Activated naive CD4-positive, alpha-beta T cell treated with anti-CD3 and anti-CD28 coated beads for 36 hours (primary cell): ENCODE measurements at regions of chr12 and their contacts with region 1.

Region 1: GRCh38 chr12:9869307-9870161 is at the start of gene CLEC2B:
- DNase-seq: peak; percentile 37
- H3K4me3 Mint-ChIP-seq: peak within 1 kb of the TSS; percentile 91
- H3K27ac Mint-ChIP-seq: peak within 1 kb of the TSS; percentile 98
- H3K4me1 Mint-ChIP-seq: peaks cover 22% of the 10 kb centered on the region
- H3K27me3 Mint-ChIP-seq: no peaks in the 10 kb centered on the region
- total RNA-seq, gene CLEC2B: 30.3 to 30.7 TPM

Region 2: DNA sequence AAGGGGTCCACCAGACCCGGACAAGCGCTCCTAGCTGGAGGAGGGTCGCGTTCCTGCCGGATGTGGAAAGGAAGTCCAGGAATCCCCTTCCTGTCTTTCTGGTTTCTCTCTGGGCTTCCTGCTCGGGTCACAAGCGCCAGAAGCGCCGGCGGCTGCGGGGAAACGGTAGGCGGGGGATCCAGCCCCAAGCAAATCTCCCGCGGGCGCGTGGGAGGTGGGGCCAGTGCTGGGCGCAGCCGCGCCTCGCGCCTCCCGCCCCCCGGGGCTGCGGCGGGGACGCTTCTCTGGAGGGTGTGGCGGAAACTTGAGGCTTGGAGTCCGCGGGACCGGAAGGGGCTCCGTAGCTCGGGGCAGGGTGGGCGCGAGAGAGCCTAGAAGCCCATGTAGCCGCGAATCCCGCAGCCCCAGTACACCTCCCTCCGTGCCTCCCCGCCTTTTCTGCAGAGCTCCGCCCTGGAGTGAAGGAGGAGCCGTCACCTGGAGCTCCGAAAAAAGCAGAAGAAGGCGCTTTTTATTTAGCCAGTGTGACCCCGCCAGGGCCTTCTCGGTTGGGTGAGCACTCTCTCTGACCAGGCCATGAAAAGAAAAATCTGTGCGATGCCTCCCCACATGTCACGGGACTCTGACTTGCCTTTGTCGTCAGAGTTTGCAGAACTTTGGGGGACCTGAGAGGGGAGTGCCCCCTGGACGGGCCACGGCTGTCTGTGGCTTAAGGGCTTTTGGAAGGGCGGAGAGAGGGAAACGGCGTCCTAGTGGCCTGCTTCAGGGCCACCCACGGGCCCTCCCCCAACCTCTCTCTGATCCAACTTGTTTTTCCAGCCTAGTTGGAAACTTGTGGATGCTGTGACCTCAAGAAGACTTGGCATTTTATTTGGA is 221.5 kb before region 1 on chr12:
- CTCF ChIA-PET with region 1: no interaction called
- intact Hi-C with region 1: loop called (anchors 1 kb)
- DNase-seq: peak; percentile 93
- H3K4me3 Mint-ChIP-seq: peak overlapping the region; percentile 95
- H3K27ac Mint-ChIP-seq: peak overlapping the region; percentile 99
- H3K4me1 Mint-ChIP-seq: peaks cover 47% of the 10 kb centered on the region
- H3K27me3 Mint-ChIP-seq: no peaks in the 10 kb centered on the region

Region 3: GRCh38 chr12:9760699-9761418 is 108.7 kb before region 1 on chr12 and contains the start of gene CD69:
- CTCF ChIA-PET with region 1: interaction called, 7 read pairs
- intact Hi-C with region 1: loop called (anchors 1 kb)
- DNase-seq: peak; percentile 88
- H3K4me3 Mint-ChIP-seq: peak within 1 kb of the TSS; percentile 95
- H3K27ac Mint-ChIP-seq: peak within 1 kb of the TSS; percentile 99
- H3K4me1 Mint-ChIP-seq: peaks cover 36% of the 10 kb centered on the region
- H3K27me3 Mint-ChIP-seq: no peaks in the 10 kb centered on the region
- total RNA-seq, gene CD69: 150 to 153 TPM

Region 4: DNA sequence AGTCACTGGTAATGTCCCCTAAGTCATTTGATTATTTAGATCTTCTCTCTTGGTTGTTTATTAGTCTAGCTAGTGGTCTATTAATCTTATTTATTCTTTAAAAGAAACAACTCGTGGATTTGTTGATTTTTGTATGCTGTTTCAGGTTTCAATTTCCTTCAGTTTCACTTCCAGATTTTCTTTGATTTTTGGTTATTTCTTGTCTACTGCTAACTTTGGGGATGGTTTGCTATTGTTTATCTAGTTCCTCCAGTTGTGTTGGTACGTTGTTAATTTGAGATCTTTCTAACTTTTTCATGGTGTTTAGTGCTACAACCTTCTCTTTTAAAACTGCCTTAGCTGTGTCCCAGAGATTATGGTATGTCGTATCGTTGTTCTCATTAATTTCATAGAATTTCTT is 90.3 kb before region 1 on chr12:
- CTCF ChIA-PET with region 1: no interaction called
- intact Hi-C with region 1: no loop called
- DNase-seq: no peak
- H3K4me3 Mint-ChIP-seq: no peak overlapping the region
- H3K27ac Mint-ChIP-seq: no peak overlapping the region
- H3K4me1 Mint-ChIP-seq: peaks cover 89% of the 10 kb centered on the region
- H3K27me3 Mint-ChIP-seq: no peaks in the 10 kb centered on the region

Region 5: GRCh38 chr12:9906873-9907272 is 37.3 kb after region 1 on chr12:
- CTCF ChIA-PET with region 1: no interaction called
- intact Hi-C with region 1: loop called (anchors 1 kb)
- DNase-seq: peak; percentile 49
- H3K4me3 Mint-ChIP-seq: no peak overlapping the region
- H3K27ac Mint-ChIP-seq: peak overlapping the region; percentile 68
- H3K4me1 Mint-ChIP-seq: peaks cover 21% of the 10 kb centered on the region
- H3K27me3 Mint-ChIP-seq: no peaks in the 10 kb centered on the region

Region 6: GRCh38 chr12:9948606-9949296 is 79.2 kb after region 1 on chr12:
- CTCF ChIA-PET with region 1: no interaction called
- intact Hi-C with region 1: loop called (anchors 1 kb)
- DNase-seq: peak; percentile 20
- H3K4me3 Mint-ChIP-seq: no peak overlapping the region
- H3K27ac Mint-ChIP-seq: no peak overlapping the region
- H3K4me1 Mint-ChIP-seq: peaks cover 48% of the 10 kb centered on the region
- H3K27me3 Mint-ChIP-seq: no peaks in the 10 kb centered on the region

Region 7: GRCh38 chr12:10227648-10228047 is 358.1 kb after region 1 on chr12:
- CTCF ChIA-PET with region 1: no interaction called
- intact Hi-C with region 1: no loop called
- DNase-seq: no peak
- H3K4me3 Mint-ChIP-seq: no peak overlapping the region
- H3K27ac Mint-ChIP-seq: no peak overlapping the region
- H3K4me1 Mint-ChIP-seq: peaks cover 14% of the 10 kb centered on the region
- H3K27me3 Mint-ChIP-seq: no peaks in the 10 kb centered on the region

Region 8: DNA sequence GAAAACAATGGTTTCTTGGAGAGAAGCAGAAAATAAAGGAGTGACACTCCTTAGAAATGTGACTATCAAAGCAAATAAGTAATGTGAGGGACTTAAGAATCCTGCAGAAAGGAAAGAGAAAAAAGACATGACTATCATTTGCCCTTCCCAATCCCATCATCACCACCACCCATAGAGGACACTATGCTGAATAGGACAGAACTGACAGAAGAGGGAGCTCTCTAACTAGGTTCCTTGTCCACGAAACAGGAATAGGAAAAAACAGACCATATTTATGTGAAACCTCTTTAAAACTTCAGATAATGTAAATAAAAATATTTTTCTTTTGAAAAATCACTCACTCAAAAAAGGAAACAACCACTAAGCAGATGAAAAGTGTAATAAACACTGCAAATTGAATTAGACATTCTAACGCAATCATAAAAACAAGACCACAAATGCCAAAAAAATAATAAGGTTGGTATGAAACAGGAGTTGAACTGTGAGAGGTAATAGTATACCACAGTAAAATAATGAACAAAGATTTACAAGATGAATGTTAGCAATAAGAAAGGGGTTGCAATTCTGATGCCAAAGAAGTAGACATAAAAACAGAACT is 462.2 kb after region 1 on chr12:
- CTCF ChIA-PET with region 1: no interaction called
- intact Hi-C with region 1: no loop called
- DNase-seq: no peak
- H3K4me3 Mint-ChIP-seq: no peak overlapping the region
- H3K27ac Mint-ChIP-seq: no peak overlapping the region
- H3K4me1 Mint-ChIP-seq: no peaks in the 10 kb centered on the region
- H3K27me3 Mint-ChIP-seq: peaks cover 4% of the 10 kb centered on the region

Region 9: GRCh38 chr12:10613349-10614055 is 744.0 kb after region 1 on chr12 and contains the start of gene MAGOHB:
- CTCF ChIA-PET with region 1: no interaction called
- intact Hi-C with region 1: loop called (anchors 5 kb)
- DNase-seq: peak; percentile 99
- H3K4me3 Mint-ChIP-seq: peak within 1 kb of the TSS; percentile 99
- H3K27ac Mint-ChIP-seq: peak within 1 kb of the TSS; percentile 99
- H3K4me1 Mint-ChIP-seq: peaks cover 30% of the 10 kb centered on the region
- H3K27me3 Mint-ChIP-seq: peaks cover 2% of the 10 kb centered on the region
- total RNA-seq, gene MAGOHB: 58.8 to 61.1 TPM